ENCODE measurements at regions of chr16 and their contacts with region 1.

Region 1: DNA sequence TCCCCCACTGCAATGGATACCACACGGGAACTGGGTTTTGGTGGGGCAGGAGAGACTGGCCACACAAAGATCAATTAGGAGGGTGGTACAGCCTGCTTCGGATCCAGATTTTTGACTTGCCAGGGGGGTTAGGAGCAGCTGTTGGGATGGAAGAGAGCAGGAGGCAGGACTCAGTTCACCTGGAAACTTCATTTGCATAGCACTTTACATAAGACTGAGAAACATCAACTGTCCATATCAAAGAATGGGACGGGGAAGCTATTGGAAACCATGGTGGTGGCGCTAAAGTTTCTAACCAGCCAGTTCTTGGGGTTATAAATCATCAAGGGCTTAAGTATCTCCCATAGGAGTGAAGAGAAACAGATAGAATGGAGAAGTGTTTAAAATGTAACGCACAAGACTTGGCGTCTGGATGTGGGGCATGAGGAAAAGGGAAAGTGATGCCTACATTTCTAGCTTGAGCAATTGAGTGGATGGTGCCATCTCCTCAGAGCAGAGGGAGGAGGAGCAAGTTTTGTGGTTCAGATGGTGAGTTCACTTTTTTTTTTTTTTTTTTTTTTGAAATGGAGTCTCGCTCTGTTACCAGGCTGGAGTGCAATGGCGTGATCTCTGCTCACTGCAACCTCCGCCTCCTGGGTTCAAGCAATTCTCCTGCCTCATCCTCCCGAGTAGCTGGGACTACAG is 6.4 kb upstream of the SRCAP start:
- DNase-seq: no peak
- ATAC-seq: no peak
- H3K4me3 ChIP-seq: no peak overlapping the region
- H3K4me3 Mint-ChIP-seq: no peak overlapping the region
- H3K27ac ChIP-seq: no peak overlapping the region
- H3K27ac Mint-ChIP-seq: peak overlapping the region; percentile 34 to 53
- H3K4me1 ChIP-seq: peaks cover 2 to 14% of the 10 kb centered on the region in 2 experiments
- H3K4me1 Mint-ChIP-seq: peaks cover 16 to 19% (median 17%) of the 10 kb centered on the region in 3 donors
- H3K27me3 ChIP-seq: no peaks in the 10 kb centered on the region
- H3K27me3 Mint-ChIP-seq: no peaks in the 10 kb centered on the region

Region 2: DNA sequence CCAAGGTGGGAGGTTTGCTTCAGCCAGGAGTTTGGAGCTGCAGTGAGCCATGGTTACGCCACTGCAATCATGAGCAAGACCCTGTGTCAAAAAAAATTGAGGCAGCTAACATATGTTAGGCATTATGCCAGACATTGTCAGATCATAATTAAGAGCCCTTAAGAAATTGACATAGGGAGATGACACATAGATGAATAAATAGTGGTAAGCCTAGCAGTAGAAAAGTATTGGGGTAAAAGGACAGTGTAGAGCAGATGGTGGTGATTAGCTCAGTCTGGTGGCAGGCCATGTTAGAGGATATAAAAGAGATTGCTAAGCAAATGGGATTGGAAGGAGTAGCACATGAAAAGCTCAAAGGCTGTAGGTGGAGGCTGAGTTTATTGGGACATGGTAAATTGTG is 29.1 kb after region 1 on chr16:
- CTCF ChIA-PET with region 1: no interaction called
- POLR2A ChIA-PET with region 1: interaction called, 3 to 10 read pairs
- DNase-seq: no peak
- ATAC-seq: no peak
- H3K4me3 ChIP-seq: no peak overlapping the region
- H3K4me3 Mint-ChIP-seq: no peak overlapping the region
- H3K27ac ChIP-seq: no peak overlapping the region
- H3K27ac Mint-ChIP-seq: peak overlapping the region in 1 of 2 donors; percentile 31
- H3K4me1 ChIP-seq: no peaks in the 10 kb centered on the region
- H3K4me1 Mint-ChIP-seq: peaks cover 9 to 26% (median 16%) of the 10 kb centered on the region in 3 donors
- H3K27me3 ChIP-seq: no peaks in the 10 kb centered on the region
- H3K27me3 Mint-ChIP-seq: no peaks in the 10 kb centered on the region

Region 3: GRCh38 chr16:30874821-30875717 is 182.5 kb after region 1 on chr16:
- CTCF ChIA-PET with region 1: no interaction called
- POLR2A ChIA-PET with region 1: no interaction called
- DNase-seq: peak; percentile 70 to 92 (median 82)
- ATAC-seq: peak; percentile 87 to 93 (median 92)
- H3K4me3 ChIP-seq: peak overlapping the region; percentile 71 to 85
- H3K4me3 Mint-ChIP-seq: peak overlapping the region; percentile 91 to 97 (median 93)
- H3K27ac ChIP-seq: peak overlapping the region; percentile 89
- H3K27ac Mint-ChIP-seq: peak overlapping the region; percentile 86 to 98
- H3K4me1 ChIP-seq: peaks cover 16 to 46% of the 10 kb centered on the region in 2 experiments
- H3K4me1 Mint-ChIP-seq: peaks cover 30 to 43% (median 33%) of the 10 kb centered on the region in 3 donors
- H3K27me3 ChIP-seq: no peaks in the 10 kb centered on the region
- H3K27me3 Mint-ChIP-seq: no peaks in the 10 kb centered on the region